Activated naive CD4-positive, alpha-beta T cell treated with anti-CD3 and anti-CD28 coated beads, Interleukin-2, amount 10 ng/mL, durations not matched to agents 7 days and 5 days (primary cell): ENCODE measurements at regions of chr19 and their contacts with region 1.

Region 1: GRCh38 chr19:4342615-4343369 is 570 bp upstream of the MPND start:
- DNase-seq: peak; percentile 97
- H3K4me3 Mint-ChIP-seq: peak overlapping the region; percentile 89
- H3K27ac Mint-ChIP-seq: peak overlapping the region; percentile 93
- H3K4me1 Mint-ChIP-seq: peaks cover 43% of the 10 kb centered on the region
- H3K27me3 Mint-ChIP-seq: no peaks in the 10 kb centered on the region

Region 2: GRCh38 chr19:4182084-4182810 is 160.5 kb before region 1 on chr19 and contains the starts of genes ANKRD24 and SIRT6:
- CTCF ChIA-PET with region 1: no interaction called
- DNase-seq: peak; percentile 97
- H3K4me3 Mint-ChIP-seq: peak within 1 kb of the TSS; percentile 98
- H3K27ac Mint-ChIP-seq: peak within 1 kb of the TSS; percentile 96
- H3K4me1 Mint-ChIP-seq: peaks cover 49% of the 10 kb centered on the region
- H3K27me3 Mint-ChIP-seq: peaks cover 26% of the 10 kb centered on the region

Region 3: DNA sequence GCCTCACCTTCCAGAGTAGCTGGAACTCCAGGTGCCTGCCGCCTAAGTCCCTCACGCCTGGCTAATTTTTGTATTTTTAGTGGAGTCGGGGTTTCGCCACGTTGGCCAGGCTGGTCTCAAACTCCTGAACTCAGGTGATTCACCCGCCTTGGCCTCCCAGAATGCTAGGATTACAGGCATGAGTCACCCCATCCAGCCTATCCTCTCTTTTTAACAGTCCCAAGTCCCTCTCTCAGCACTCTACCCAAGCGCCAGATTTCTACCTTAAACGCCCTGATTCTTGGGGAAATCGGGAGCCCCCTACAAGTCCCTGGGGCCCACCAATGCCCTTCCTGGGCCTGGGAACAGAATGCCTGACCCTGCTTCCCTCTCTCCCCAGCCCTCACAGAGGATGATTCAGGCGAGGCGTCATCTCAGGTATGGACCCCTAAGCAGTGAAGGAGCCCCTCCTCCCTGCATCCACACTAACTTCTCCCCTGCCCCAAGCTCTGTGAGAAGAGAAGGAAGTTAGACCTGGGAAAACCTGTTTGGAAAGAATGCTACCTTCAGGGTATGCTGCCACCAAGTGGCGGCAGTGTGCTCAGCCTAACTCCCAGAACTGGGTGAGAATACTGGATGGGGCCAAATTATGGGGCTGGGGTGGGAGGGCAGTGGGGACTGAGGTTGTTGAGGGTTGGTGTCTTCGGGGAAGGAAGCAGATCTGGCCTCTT is 134.3 kb before region 1 on chr19:
- CTCF ChIA-PET with region 1: no interaction called
- DNase-seq: no peak
- H3K4me3 Mint-ChIP-seq: no peak overlapping the region
- H3K27ac Mint-ChIP-seq: no peak overlapping the region
- H3K4me1 Mint-ChIP-seq: no peaks in the 10 kb centered on the region
- H3K27me3 Mint-ChIP-seq: peaks cover 24% of the 10 kb centered on the region

Region 4: GRCh38 chr19:4267101-4267900 is 75.5 kb before region 1 on chr19:
- CTCF ChIA-PET with region 1: interaction called, 15 read pairs
- DNase-seq: peak; percentile 77
- H3K4me3 Mint-ChIP-seq: no peak overlapping the region
- H3K27ac Mint-ChIP-seq: peak overlapping the region; percentile 42
- H3K4me1 Mint-ChIP-seq: peaks cover 30% of the 10 kb centered on the region
- H3K27me3 Mint-ChIP-seq: no peaks in the 10 kb centered on the region

Region 5: DNA sequence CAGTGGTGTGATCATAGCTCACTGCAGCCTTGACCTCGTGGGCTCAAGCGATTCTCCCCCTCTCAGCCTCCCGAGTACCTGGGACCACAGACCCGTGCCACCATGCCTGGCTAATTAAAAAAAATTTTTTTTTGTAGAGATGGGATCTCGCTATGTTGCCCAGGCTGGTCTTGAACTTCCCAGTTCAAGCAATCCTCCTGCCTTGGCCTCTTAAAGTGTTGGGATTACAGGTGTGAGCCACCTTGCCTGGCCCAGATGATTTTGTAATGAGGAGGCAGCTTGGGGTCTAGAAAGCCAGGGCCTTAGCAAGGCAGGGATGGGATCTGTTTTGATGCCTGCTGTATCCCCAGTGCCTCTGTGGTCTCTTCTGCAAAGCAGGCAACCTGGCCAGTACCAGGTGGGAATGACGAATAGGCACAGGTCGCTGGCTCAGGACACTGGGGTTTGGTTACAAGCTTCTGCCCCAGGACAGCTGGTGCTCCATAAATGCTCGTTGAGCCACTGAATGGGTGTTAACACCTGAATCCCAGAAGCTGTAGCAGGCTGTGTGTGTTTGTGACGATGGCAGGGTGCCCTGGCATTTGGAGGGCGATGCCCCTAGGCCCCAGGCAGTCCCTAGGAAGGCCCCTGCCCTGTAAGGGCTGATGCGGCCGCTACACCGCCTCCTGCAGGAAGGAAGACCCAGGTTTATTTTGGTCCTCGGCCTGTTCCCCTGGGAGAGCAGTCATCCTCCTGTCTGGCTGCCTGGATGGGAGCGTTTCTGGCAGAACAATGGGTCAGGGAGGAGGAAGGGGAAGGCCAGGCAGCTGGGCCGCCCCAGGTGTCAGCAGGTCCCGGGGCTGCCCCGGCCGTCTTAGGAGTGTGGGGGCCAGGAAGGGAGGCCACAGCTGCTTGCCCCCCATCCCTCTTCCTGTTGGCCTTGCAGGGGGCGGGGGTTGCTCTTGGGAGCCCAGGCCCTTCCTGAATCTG is 305.2 kb after region 1 on chr19:
- CTCF ChIA-PET with region 1: no interaction called
- DNase-seq: no peak
- H3K4me3 Mint-ChIP-seq: no peak overlapping the region
- H3K27ac Mint-ChIP-seq: no peak overlapping the region
- H3K4me1 Mint-ChIP-seq: no peaks in the 10 kb centered on the region
- H3K27me3 Mint-ChIP-seq: no peaks in the 10 kb centered on the region